ENCODE measurements at regions of chr10 and their contacts with region 1.

Region 1: DNA sequence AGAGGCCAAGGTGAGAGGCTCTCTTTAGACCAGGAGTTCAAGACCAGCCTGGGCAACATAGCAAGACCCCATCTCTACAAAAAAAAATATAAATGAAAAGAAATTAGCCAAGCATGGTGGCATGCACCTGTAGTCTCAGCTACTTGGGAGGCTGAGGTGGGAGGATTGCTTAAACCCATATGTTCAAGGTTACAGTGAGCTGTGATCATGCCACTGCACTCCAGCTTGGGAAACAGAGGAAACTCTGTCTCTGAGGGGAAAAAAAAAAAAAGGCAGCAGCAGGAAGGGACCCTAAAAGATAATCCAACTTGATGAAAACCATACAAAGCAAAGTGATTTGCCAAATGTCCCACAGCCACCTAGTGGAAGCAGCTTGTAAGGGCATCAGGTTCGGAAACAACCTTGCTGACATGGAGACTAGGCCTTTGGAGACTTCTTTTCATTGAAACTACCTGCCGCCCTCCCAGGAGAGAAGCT is 15.6 kb upstream of the PBLD start:
- DNase-seq: peak; percentile 65
- ATAC-seq: peak; percentile 64
- H3K4me3 Mint-ChIP-seq: no peak overlapping the region
- H3K27ac Mint-ChIP-seq: peak overlapping the region; percentile 54
- H3K4me1 Mint-ChIP-seq: peaks cover 7% of the 10 kb centered on the region
- H3K27me3 Mint-ChIP-seq: no peaks in the 10 kb centered on the region

Region 2: GRCh38 chr10:68110027-68110426 is 238.3 kb before region 1 on chr10:
- CTCF ChIA-PET with region 1: no interaction called
- POLR2A ChIA-PET with region 1: no interaction called
- DNase-seq: no peak
- ATAC-seq: no peak
- H3K4me3 Mint-ChIP-seq: no peak overlapping the region
- H3K27ac Mint-ChIP-seq: no peak overlapping the region
- H3K4me1 Mint-ChIP-seq: no peaks in the 10 kb centered on the region
- H3K27me3 Mint-ChIP-seq: peaks cover 9% of the 10 kb centered on the region

Region 3: DNA sequence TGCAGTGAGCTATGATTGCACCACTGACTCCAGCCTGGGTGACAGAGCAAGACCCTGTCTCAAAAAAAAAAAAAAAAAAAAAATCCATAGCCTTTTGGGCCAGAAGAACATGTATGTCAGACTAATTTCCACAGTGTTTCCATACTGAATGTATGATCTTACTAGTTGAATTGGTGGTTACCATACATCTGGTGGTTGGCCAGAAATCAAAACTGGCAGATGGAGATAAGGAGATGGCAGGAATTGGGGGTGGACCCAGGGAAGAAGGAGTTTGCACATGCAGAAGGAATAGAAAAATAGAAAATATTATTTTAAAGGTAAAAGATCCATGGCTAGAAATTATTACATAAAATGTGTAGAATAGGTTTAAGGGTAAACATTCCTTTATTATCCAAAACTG is 112.7 kb before region 1 on chr10:
- CTCF ChIA-PET with region 1: no interaction called
- POLR2A ChIA-PET with region 1: no interaction called
- DNase-seq: no peak
- ATAC-seq: no peak
- H3K4me3 Mint-ChIP-seq: no peak overlapping the region
- H3K27ac Mint-ChIP-seq: no peak overlapping the region
- H3K4me1 Mint-ChIP-seq: peaks cover 9% of the 10 kb centered on the region
- H3K27me3 Mint-ChIP-seq: peaks cover 25% of the 10 kb centered on the region

Region 4: GRCh38 chr10:68331455-68332258 is 16.6 kb before region 1 on chr10 and contains the start of gene HNRNPH3:
- CTCF ChIA-PET with region 1: interaction called, 26 read pairs
- POLR2A ChIA-PET with region 1: interaction called, 6 read pairs
- DNase-seq: peak; percentile 99
- ATAC-seq: peak; percentile 88
- H3K4me3 Mint-ChIP-seq: peak within 1 kb of the TSS; percentile 98
- H3K27ac Mint-ChIP-seq: peak within 1 kb of the TSS; percentile 100
- H3K4me1 Mint-ChIP-seq: peaks cover 44% of the 10 kb centered on the region
- H3K27me3 Mint-ChIP-seq: no peaks in the 10 kb centered on the region
- total RNA-seq, gene HNRNPH3: 114 to 122 TPM

Region 5: DNA sequence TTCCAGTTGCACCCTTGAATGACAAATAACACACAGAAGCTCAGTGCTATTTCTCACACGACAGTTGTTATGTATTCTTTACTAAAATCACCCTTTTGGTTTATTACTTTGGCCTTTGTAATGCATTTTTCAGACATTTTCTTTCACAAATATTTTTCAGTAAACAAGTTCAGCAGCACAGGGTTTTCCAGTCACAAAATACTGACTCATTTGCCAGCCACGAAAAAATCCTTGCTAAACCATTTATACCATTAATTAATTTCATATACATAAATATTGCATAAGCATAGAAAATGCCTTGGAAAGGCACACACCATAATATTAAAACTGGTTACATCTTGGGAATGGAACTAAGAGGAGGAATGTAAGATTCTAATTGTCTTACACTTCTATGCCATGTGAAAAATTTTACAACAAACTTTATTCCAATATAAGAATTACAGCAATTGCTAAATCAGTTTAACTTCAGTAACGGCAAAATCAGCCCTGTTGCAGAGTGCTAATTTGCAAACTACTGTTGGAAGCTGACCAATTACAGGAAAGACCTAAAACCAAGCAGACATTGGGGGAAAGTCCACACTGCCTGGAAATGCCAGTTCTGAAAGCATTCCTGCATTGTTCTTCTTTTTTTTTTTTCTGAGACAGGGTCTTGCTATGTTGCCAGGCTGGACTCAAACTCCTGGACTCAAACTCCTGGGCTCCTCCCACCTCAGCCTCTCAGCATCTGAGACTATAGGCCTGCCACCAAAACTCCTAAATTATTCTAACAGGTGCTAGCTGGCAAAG is 16.0 kb after region 1 on chr10:
- CTCF ChIA-PET with region 1: interaction called, 14 read pairs
- POLR2A ChIA-PET with region 1: no interaction called
- DNase-seq: no peak
- ATAC-seq: no peak
- H3K4me3 Mint-ChIP-seq: no peak overlapping the region
- H3K27ac Mint-ChIP-seq: no peak overlapping the region
- H3K4me1 Mint-ChIP-seq: peaks cover 6% of the 10 kb centered on the region
- H3K27me3 Mint-ChIP-seq: no peaks in the 10 kb centered on the region

Region 6: GRCh38 chr10:68471586-68472408 is 123.5 kb after region 1 on chr10 and contains the start of gene DNA2:
- CTCF ChIA-PET with region 1: no interaction called
- POLR2A ChIA-PET with region 1: no interaction called
- DNase-seq: peak; percentile 86
- ATAC-seq: peak; percentile 89
- H3K4me3 Mint-ChIP-seq: peak within 1 kb of the TSS; percentile 99
- H3K27ac Mint-ChIP-seq: peak within 1 kb of the TSS; percentile 99
- H3K4me1 Mint-ChIP-seq: peaks cover 25% of the 10 kb centered on the region
- H3K27me3 Mint-ChIP-seq: no peaks in the 10 kb centered on the region
- total RNA-seq, gene DNA2: 51.4 to 52.6 TPM